ENCODE measurements at regions of chr11 and their contacts with region 1.

Region 1: GRCh38 chr11:122170815-122171475 is 54.9 kb upstream of the BLID start:
- DNase-seq: peak; percentile 99
- ATAC-seq: peak; percentile 69
- H3K4me3 ChIP-seq: peak overlapping the region; percentile 48
- H3K27ac ChIP-seq: peak overlapping the region; percentile 99
- H3K4me1 ChIP-seq: peaks cover 89% of the 10 kb centered on the region
- H3K27me3 ChIP-seq: no peaks in the 10 kb centered on the region
- CTCF ChIP-seq: no peak

Region 2: DNA sequence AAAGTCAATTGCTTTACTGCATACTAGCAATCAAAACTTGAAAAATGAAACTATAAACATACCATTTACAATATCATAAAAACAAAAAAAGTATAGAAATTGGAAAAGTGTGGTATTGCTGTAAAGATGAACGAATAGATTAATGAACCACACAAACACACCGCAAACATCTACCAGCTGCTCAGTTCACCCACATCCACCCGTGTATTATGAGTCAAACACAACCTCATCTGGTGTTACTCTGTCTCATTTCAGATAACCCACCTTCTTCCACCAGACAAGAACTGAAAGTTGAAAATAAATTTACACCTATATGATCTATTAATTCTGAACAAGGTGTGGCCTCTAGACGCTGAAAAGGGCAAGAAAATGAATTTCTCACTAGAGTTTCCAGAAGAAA is 108.2 kb before region 1 on chr11:
- CTCF ChIA-PET with region 1: no interaction called
- POLR2A ChIA-PET with region 1: no interaction called
- intact Hi-C with region 1: no loop called
- DNase-seq: no peak
- ATAC-seq: no peak
- H3K4me3 ChIP-seq: no peak overlapping the region
- H3K27ac ChIP-seq: no peak overlapping the region
- H3K4me1 ChIP-seq: no peaks in the 10 kb centered on the region
- H3K27me3 ChIP-seq: peaks cover 6% of the 10 kb centered on the region; the same call in 1 of the 2 replicates
- CTCF ChIP-seq: no peak

Region 3: DNA sequence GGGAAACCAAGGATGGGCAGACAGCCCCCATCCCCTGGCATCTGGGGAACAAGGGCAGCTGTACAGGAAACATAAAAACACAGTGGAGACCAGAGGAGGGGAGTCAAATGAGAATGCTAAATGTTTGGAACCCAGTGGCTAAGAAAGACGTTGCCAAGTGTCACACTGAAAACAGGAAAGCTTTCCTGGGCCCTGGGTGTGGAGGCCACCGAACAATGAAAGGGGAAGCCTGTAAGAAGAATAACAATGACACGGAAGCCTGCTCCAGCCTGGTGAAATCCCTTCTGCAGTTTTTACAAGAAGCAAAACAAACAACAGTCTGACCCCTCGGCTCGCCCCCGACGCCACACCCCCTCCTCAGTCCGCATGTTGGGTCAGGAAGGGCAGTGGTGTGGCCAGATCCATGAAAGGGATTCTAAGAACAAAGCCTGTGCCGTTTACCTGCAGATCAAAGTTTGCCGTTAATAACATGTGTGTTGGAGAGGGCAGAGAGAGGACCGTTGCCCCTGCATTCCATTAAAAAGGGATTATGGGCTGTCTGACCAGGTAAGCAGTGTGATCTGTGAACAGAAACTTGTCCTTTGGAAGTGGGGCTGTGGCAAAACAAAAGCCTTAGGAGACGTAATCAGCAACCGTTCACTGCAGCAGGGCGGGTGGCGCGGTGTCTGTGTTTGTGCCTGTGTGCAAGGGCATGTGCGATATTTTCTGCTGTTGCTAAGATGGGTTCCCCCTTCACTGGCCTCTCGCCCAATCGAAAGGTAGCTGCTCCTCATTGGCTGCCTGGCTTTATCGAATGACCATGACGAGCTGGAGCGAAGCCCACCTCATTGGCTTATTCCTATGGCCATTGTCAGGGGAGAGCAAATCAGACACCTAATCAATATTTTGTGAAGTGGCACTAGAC is 58.8 kb after region 1 on chr11:
- CTCF ChIA-PET with region 1: no interaction called
- POLR2A ChIA-PET with region 1: no interaction called
- intact Hi-C with region 1: no loop called
- DNase-seq: no peak
- ATAC-seq: no peak; the same call in 1 of the 2 replicates
- H3K4me3 ChIP-seq: no peak overlapping the region
- H3K27ac ChIP-seq: no peak overlapping the region
- H3K4me1 ChIP-seq: 0 out of 2 replicates have a peak, but pooled peaks cover 4% of the 10 kb centered on the region
- H3K27me3 ChIP-seq: peaks cover 66% of the 10 kb centered on the region
- CTCF ChIP-seq: no peak

Region 4: DNA sequence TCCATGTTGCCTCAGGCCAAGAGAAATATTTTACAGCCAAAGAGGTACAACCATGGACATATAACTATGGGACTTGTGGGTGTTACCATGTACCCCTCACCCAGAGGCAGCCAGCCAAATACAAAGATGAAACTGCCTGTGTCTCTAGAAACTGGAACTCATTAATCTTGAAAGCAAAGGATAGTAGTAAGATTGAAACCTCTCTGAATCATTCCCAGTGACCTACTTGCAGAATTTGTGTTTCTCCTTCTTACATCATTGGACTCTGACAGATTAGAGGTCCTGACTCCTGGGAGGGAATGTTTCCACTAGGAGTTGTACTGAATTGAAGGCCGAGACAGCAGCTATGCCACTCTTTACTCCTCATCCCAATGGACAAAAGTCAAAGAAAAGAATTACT is 227.2 kb after region 1 on chr11:
- CTCF ChIA-PET with region 1: no interaction called
- POLR2A ChIA-PET with region 1: interaction called, 11 read pairs
- intact Hi-C with region 1: no loop called
- DNase-seq: no peak
- ATAC-seq: no peak
- H3K4me3 ChIP-seq: no peak overlapping the region
- H3K27ac ChIP-seq: no peak overlapping the region
- H3K4me1 ChIP-seq: no peaks in the 10 kb centered on the region
- H3K27me3 ChIP-seq: peaks cover 64% of the 10 kb centered on the region
- CTCF ChIP-seq: no peak

Measured in PC-3 (cell line).